Posterior cingulate gyrus (tissue), 11 donors: ENCODE measurements at regions of chr15 and their contacts with region 1.

Region 1: DNA sequence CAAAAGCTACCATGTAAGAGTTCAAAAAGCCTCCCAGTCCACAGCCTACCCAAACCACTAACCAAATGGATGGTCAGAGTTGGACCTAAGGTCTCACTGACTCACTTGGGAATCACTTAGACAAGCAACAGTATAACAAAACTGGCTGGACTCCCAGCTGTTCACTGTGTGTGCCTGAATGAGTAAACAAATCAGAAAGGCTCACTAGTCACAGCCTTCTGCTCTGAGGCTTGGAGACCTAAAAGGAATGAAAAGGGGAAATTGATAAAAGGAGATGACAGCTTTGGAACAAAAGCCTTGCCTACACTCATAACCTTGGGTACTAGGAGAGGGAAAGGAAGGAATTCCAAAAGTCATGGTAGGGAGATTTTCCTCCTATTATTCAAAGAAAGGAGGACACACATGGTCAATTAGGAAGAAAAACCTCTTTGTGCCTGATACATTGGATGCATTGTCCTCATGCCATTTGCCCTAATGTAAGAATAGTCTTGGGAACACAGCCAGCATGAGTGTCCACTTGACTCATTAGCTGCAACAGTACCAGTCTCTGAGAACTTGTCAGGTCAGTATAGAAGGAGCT is 92.3 kb downstream of the FRMD5 start:
- DNase-seq: peak in 6 of 10 donors; percentile 26 to 87 (median 59)

Region 2: DNA sequence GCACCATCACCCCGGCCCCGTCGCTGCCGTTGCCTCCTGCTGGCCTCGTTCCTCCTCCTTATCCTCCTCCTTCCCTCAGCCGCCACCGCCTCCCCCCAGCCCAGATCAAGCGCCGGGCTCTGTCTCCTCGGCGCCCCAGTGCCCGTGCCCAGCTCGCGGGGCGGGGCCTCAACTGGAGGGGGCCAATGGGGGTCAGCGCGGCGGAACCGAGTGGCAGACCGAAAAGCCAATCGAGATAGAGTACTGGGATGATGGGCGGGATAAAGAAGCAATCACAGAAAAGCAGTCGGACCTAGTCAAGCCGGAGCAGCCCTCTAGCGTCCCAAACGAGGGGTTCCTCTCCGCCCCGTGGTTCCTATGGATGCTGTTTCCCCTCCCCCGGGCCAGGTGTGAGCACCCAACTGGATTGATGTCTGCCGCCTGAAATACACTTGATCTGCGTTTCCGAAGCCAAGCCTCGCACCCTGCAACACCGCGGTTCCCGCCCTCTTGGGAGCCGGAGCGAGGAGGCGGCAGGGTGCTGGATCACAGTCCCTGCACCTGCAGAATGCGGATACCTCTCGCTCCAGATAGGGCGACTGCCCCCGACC is 92.5 kb after region 1 on chr15 and contains the start of gene FRMD5:
- intact Hi-C with region 1: loop called (anchors 10 kb)
- DNase-seq: peak; percentile 94 to 99 (median 96)